AG04449 (cell line): ENCODE measurements at regions of chr19 and their contacts with region 1.

Region 1: DNA sequence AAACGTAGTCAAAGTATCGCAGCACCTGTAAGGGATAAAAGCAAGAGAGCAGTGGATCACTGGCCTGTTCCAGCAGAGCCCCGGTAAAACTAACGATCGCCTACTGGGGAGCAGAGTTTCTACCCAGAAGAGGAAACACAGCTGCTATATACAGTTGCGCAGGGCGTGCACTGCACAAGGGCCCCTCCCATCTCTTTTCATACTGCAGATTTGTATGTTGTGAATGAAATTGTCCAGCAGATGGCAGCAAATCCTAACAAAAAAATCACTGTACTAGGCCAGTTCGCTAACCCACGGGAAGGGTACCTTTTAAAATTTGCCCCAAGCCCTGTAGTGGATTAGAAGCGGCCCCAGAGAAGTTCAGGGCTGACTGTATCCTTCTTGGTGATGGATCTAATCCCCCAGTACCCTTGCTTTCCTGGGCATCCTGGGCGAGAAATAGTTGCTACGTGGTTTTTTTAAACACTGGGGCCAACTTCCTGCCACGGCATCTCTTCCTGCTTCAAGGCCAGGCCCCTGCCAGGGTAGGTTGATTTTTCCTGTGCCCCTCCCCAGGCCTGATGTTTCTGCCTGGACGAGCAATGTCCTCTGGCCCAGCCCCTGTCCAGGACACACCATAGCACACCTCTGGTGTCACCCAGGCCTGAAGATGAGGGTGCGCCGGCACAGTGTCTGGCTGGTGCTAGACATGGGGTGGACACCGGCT is 127.0 kb downstream of the IER2 start:
- DNase-seq: no peak
- H3K4me3 ChIP-seq: no peak overlapping the region
- CTCF ChIP-seq: peak; percentile 39

Region 2: GRCh38 chr19:13234518-13234917 is 42.7 kb before region 1 on chr19:
- CTCF ChIA-PET with region 1: no interaction called
- POLR2A ChIA-PET with region 1: no interaction called
- DNase-seq: no peak
- H3K4me3 ChIP-seq: no peak overlapping the region
- CTCF ChIP-seq: peak; percentile 74

Region 3: GRCh38 chr19:13262450-13262849 is 14.8 kb before region 1 on chr19:
- CTCF ChIA-PET with region 1: interaction called, 32 read pairs
- POLR2A ChIA-PET with region 1: no interaction called
- DNase-seq: no peak
- H3K4me3 ChIP-seq: no peak overlapping the region
- CTCF ChIP-seq: peak; percentile 48

Region 4: GRCh38 chr19:13334801-13335481 is 57.7 kb after region 1 on chr19:
- CTCF ChIA-PET with region 1: interaction called, 15 read pairs
- POLR2A ChIA-PET with region 1: no interaction called
- DNase-seq: no peak
- H3K4me3 ChIP-seq: no peak overlapping the region
- CTCF ChIP-seq: no peak

Region 5: DNA sequence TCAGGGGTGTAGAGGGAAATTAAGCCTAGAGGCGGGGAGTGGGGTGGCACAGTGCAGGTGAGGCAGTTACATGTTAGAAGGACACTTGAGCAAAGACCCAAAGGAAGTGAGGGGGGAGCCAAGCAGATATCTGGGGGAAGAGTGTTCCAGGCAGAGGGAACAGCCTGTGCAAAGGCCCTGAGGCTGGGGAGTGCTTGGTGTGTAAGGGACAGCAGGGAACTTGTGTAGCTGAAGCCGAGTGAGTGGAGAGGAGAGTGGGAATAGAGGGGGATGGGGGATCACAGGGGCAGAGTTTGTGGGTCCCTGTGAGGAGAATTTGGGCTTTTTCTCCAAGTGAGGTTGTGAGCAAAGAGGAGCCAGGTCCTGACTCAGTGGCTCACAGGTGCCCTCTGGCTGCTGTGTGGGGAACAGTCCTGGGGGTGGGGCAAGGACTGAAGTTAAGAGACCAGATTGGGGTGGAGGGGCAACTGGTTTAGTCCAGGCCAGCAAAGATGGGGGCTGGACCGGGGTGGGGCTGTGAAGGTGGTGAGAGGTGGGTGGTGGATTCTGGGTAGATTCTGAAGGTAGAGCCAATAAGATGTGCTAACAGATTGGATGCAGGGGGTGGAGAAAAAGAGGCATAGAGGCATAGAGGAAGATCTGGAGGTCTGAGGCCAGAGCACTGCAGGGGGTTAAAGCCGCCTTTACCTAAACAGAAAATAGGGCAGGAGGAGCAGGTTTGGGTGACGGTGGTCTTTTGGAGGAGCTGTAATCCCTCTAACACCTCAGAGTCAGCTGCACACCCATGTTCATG is 153.7 kb after region 1 on chr19:
- CTCF ChIA-PET with region 1: interaction called, 66 read pairs
- POLR2A ChIA-PET with region 1: no interaction called
- DNase-seq: no peak
- H3K4me3 ChIP-seq: no peak overlapping the region
- CTCF ChIP-seq: peak; percentile 88

Region 6: DNA sequence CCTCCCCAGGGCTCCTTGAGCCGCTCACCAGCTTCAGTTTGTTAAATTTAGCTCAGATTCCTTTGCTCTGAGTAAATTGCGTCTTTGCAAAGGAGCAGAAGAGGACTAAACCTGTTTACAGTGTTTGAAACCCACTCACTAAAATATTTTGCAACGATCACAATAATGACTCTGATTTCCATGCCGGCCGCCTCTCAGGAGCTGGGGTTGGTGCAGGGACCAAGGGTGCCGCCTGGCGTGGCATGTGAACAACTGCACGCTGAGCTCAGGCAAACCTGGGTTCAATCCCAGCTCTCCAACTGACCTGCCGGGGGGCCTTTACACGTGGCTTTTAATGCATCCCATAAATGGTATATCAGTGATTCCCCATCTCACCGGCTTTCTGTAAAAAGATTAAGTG is 297.7 kb after region 1 on chr19:
- CTCF ChIA-PET with region 1: interaction called, 65 read pairs
- POLR2A ChIA-PET with region 1: no interaction called
- DNase-seq: no peak
- H3K4me3 ChIP-seq: no peak overlapping the region
- CTCF ChIP-seq: peak; percentile 54

Region 7: DNA sequence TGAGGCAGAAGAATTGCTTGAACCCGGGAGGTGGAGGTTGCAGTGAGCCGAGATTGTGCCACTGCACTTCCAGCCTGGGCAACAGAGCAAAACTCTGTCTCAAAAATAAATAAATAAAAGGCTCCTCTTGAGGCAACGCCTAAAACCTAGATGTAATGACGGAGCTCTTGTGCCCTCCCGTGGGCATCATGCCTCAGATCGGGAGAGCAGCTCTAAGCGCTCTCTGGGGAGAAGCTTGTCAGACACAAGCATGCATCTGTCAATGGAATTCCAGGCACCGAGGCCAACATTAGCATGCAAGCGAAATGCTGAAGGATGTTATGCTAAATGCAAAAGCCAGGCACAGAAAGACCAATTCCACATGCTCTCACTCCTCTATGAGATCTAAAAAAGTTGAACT is 441.5 kb after region 1 on chr19:
- CTCF ChIA-PET with region 1: interaction called, 18 read pairs
- POLR2A ChIA-PET with region 1: no interaction called
- DNase-seq: peak; percentile 53
- H3K4me3 ChIP-seq: no peak overlapping the region
- CTCF ChIP-seq: peak; percentile 53